Ovary (tissue), 10 donors: ENCODE measurements at regions of chr2 and their contacts with region 1.

Region 1: GRCh38 chr2:3644891-3645605 is 13.0 kb upstream of the ALLC start:
- DNase-seq: peak in 2 of 5 donors; percentile 6 to 19
- H3K4me3 ChIP-seq: no peak overlapping the region
- H3K27ac ChIP-seq: no peak overlapping the region
- H3K4me1 ChIP-seq: peaks cover 1% of the 10 kb centered on the region
- H3K27me3 ChIP-seq: no peaks in the 10 kb centered on the region
- CTCF ChIP-seq: no peak
- EP300 ChIP-seq: no peak
- POLR2A ChIP-seq: no peak

Region 2: GRCh38 chr2:3585261-3586109 is 59.6 kb before region 1 on chr2:
- intact Hi-C with region 1: loop called in 1 of 4 experiments (anchors 5 kb)
- DNase-seq: peak; percentile 89 to 93 (median 90)
- H3K4me3 ChIP-seq: peak overlapping the region; percentile 3
- H3K27ac ChIP-seq: peak overlapping the region; percentile 14 to 71
- H3K4me1 ChIP-seq: peaks cover 29% of the 10 kb centered on the region
- H3K27me3 ChIP-seq: no peaks in the 10 kb centered on the region
- CTCF ChIP-seq: no peak
- EP300 ChIP-seq: peak; percentile 59
- POLR2A ChIP-seq: no peak